ENCODE measurements at regions of chr1 and their contacts with region 1.

Region 1: DNA sequence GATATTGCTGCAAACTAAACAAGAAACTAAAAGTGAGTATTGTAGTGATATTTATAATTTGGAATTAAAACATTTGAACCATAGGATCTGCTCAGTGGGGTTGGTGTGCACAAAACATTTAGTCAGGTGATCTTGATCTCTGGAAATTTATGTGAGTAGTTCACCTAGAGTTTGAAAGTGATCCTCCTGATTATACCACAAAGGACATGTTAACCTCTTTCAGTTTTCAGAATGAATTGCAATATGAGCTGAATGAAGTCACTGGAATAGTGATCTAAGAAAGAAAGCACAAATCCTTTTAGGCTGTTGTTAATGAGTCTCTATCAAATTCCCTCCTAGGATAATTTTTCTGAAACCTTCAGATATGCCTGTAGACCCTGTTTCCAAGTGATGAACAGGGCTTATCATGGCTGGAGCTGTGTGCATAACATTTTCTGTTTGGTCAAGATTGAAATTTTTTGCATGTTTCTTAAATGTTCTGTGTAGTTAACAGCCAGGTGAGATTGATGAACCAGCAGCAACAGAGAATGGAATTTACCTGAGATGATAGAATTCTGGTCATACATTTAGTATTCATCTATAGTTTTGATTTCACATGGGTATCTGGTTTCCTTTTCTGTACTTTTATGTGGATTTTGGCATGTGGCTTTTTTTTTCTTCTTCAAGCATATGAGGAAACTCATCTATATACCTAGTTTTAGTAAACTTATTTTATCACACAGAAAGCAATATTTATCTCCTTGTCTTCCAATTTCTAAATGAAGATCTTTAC is 25.5 kb downstream of the CDC14A start:
- DNase-seq: peak in 1 of 9 donors; percentile 28
- ATAC-seq: peak; percentile 68
- H3K4me3 ChIP-seq: no peak overlapping the region
- H3K4me3 Mint-ChIP-seq: peak overlapping the region in 9 of 10 donors; percentile 2 to 73 (median 61)
- H3K27ac ChIP-seq: peak overlapping the region; percentile 46
- H3K27ac Mint-ChIP-seq: peak overlapping the region in 8 of 9 donors; percentile 13 to 78 (median 74)
- H3K4me1 ChIP-seq: peaks cover 23 to 36% of the 10 kb centered on the region in 2 donors
- H3K4me1 Mint-ChIP-seq: peaks cover 41 to 92% (median 79%) of the 10 kb centered on the region in 7 donors
- H3K27me3 ChIP-seq: no peaks in the 10 kb centered on the region
- H3K27me3 Mint-ChIP-seq: no peaks in the 10 kb centered on the region

Region 2: DNA sequence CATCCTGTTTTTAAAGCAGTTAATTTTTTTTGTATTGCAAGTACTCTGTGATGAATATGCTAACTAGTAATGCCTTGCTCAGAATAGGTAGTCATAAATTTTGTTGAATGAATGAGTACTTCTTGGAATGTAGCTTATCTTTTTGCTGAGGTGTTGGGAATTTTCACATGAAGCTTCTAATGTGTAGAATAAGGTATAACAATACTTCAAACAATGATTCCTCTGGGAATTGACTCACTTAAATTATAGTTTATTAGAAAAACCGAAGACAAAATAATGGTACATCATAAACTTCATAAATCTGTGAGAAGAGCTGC is 11.6 kb before region 1 on chr1:
- CTCF ChIA-PET with region 1: no interaction called
- POLR2A ChIA-PET with region 1: interaction called, 3 read pairs
- intact Hi-C with region 1: loop called in 1 of 2 experiments (anchors 1 kb)
- DNase-seq: no peak
- ATAC-seq: no peak
- H3K4me3 ChIP-seq: no peak overlapping the region
- H3K4me3 Mint-ChIP-seq: peak overlapping the region in 3 of 10 donors; percentile 8 to 66 (median 27)
- H3K27ac ChIP-seq: no peak overlapping the region
- H3K27ac Mint-ChIP-seq: peak overlapping the region in 6 of 9 donors; percentile 7 to 89 (median 54)
- H3K4me1 ChIP-seq: peaks cover 46 to 47% of the 10 kb centered on the region in 2 donors
- H3K4me1 Mint-ChIP-seq: peaks cover 55 to 92% (median 79%) of the 10 kb centered on the region in 7 donors
- H3K27me3 ChIP-seq: no peaks in the 10 kb centered on the region
- H3K27me3 Mint-ChIP-seq: no peaks in the 10 kb centered on the region

Region 3: GRCh38 chr1:100443811-100444571 is 66.2 kb after region 1 on chr1:
- CTCF ChIA-PET with region 1: no interaction called
- POLR2A ChIA-PET with region 1: no interaction called
- intact Hi-C with region 1: loop called in 1 of 2 experiments (anchors 1 kb)
- DNase-seq: peak in 5 of 9 donors; percentile 31 to 42 (median 36)
- ATAC-seq: peak; percentile 6
- H3K4me3 ChIP-seq: peak overlapping the region; percentile 12
- H3K4me3 Mint-ChIP-seq: peak overlapping the region; percentile 66 to 86 (median 81)
- H3K27ac ChIP-seq: peak overlapping the region; percentile 93
- H3K27ac Mint-ChIP-seq: peak overlapping the region; percentile 92 to 99 (median 98)
- H3K4me1 ChIP-seq: peaks cover 83 to 84% of the 10 kb centered on the region in 2 donors
- H3K4me1 Mint-ChIP-seq: peaks cover 53 to 95% (median 87%) of the 10 kb centered on the region in 7 donors
- H3K27me3 ChIP-seq: no peaks in the 10 kb centered on the region
- H3K27me3 Mint-ChIP-seq: no peaks in the 10 kb centered on the region